ENCODE measurements at regions of chr1 and their contacts with region 1.

Region 1: DNA sequence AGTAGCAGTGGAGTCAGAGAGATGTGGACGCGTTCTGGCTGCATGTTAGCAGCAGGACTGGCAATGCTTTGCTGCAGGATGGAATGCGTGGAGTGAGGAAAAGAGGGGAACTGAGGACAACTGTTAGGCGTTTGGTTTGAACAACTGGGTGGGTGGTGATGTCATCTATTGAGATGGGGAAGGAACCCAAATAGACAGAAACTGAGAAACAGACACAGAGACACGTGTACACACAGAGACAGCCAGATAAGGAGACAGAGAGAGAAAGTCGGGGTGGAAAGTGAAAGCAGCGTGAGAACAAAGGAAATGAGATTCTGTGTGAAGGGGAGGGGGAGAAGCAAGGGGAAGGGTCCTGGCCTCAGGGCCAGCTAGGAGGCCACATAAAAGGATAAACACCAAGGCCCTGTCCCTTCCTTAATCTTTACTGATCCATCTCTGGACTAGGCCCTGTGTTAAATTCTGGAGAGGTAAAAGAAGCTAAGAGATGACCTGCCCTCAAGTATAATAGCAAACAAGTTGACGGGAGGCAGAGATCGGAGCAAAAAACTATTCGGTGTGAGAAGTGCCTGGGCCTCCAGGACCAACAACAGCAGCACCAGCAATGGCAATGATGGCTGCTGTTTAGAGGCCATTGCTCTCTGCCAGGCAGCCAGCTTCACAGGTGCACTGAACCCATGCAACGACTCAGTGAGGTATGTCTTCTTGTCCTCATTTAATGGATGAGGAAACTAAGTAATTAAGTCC is 31.6 kb downstream of the VWA5B1 start:
- DNase-seq: peak; percentile 78
- H3K4me3 ChIP-seq: peak overlapping the region; percentile 13
- H3K27ac ChIP-seq: peak overlapping the region; percentile 63
- H3K4me1 ChIP-seq: peaks cover 48% of the 10 kb centered on the region
- CTCF ChIP-seq: no peak

Region 2: DNA sequence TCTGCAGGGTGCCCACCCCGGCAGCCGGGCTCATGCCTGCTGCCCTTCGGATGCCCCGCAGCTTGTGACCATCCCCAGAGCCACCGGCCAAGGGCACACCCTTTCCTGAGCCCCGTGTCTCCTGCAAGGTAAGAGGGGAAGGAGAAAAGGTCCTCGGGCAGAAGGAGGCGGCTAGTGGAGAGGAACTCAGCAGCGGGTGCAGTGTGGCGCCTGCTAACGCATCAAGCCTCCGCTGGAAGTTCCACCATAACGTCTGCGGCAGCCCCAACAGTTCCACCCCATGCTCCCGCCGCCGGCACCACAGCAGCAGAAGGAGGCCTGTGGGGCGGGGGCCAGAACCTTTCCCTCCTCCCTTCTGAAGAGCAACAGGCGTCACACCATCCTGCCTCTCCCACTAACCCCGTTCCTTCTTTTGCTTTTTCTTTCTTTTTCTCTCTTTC is 30.6 kb before region 1 on chr1:
- CTCF ChIA-PET with region 1: no interaction called
- POLR2A ChIA-PET with region 1: interaction called, 13 read pairs
- intact Hi-C with region 1: no loop called
- DNase-seq: no peak
- H3K4me3 ChIP-seq: no peak overlapping the region
- H3K27ac ChIP-seq: no peak overlapping the region
- H3K4me1 ChIP-seq: no peaks in the 10 kb centered on the region
- CTCF ChIP-seq: no peak

Region 3: DNA sequence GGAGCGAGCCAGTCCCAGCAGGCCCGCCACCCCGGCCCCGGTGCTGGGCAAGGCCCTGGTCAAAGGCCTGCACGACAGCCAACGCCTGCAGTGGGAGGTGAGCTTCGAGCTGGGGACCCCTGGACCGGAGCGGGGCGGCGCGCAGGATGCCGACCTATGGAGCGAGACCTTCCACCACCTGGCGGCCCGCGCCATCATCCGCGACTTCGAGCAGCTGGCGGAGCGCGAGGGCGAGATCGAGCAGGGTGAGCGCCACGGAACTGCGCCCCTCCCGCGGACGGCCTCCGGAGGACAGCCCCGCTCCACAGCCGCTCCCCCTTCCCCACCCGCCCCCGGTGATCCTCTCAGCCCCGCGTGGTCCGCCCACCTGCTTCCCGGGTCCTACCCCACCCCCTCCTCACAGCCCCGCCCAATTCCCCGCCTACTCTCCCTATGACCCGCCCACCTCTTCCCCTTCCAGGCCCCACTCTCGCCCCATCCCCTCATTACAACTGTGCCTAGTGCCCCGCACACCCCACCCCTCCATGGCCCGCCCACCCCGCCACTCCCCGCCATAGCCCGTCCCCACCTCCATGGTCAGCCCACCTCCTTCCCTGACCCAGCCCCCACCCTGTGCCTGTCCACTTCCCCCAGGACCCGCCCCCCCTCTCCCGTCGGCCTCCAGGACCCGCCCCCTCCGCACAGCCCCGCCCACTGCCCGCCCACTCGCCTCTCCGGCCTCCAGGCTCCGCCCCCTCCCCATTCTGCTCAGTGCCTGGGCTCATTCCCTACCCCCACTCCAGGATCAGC is 21.1 kb after region 1 on chr1:
- CTCF ChIA-PET with region 1: no interaction called
- POLR2A ChIA-PET with region 1: interaction called, 5 read pairs
- intact Hi-C with region 1: loop called (anchors 1 kb)
- DNase-seq: peak; percentile 95
- H3K4me3 ChIP-seq: peak overlapping the region; percentile 58
- H3K27ac ChIP-seq: peak overlapping the region; percentile 24
- H3K4me1 ChIP-seq: peaks cover 26% of the 10 kb centered on the region
- CTCF ChIP-seq: no peak

Measured in OCI-LY7 (cell line).